ENCODE measurements at regions of chr11 and their contacts with region 1.

Region 1: DNA sequence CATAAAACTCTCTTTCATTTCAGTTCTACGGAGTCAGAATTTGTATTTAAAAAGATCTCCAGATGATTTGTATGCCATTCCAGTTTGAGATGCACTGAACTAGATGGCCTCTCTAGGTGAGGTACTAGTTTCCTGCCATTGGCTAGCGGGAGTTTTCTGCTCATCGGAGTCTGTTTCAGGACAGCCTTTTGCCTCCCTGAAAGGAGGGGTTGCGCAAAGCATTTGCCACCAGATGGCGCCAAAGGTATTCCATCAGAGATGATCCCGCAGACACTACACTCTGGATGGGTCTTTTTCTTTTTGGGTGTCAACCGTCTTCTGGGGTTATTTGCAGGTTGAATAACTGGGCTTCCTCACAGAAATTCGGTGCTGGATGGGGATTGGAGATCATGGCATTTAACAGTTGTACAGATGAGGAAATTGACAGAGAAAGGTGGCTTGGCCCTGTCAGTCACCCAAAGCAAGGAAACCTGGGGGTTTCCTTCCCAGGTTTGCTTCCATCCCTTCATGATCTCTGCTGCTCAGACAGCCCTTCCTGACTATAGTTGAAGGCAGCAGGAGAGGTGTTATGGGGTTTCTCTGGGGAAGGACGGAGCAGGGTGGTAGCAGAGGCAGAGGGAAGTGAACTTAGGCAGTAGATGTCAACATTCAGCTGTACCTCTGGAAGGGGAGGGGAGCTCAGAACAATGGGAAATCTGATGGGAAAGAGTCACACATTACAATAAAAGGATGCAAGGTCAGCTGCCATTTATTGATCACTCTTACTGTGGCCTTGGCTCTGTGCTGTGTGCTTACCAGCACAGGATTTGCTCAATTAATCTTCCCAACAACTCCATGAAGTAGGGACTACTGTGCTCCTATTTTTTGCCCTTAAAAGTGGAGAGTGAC is 81.6 kb downstream of the CCDC81 start:
- DNase-seq: no peak
- H3K4me3 ChIP-seq: no peak overlapping the region
- CTCF ChIP-seq: peak; percentile 83

Region 2: DNA sequence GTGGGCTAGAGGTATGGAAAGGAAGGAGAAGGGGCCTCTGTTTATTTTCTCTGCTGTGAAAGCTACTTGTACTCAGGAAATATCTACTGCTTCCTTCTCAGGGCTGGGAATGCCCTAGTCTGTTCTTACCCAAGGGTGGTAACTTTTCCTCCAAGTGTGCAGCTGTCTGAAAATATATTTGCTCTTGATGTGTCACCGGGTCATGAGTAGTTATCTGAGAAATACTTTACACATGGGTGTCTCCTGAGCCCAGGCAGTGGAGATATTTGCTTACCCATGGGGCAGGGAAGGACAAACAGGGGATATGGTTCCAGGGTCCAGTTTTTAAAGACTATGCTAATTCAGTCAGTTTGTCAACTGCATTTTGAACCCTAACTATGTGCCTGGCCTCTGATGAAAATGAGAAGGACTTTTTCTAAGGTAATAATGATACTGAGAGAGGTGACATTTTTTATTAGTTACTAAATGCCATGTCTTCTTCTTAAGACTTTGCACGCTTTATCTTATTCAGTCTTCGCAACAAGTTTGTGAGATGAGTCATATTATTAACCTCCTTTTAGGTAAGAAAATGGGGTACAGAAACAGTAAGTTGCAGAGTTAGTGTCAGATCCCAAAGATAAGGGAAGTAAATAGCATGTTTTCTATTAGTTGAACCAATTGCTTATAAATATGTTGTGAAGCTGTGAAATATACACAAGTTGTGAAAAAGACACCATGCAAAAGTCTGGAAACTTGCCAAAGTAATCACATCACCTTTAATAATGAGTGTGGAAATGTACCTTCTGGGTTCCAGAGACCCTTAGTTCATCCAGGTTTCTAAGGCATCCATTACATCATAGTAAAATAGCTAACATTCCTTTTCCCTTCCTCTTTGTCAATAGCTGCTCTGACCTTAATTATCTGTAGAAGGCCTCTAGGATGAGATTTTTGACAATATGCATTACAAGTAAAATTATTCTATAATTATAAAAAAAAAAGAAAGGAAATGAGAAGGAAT is 668.2 kb before region 1 on chr11:
- CTCF ChIA-PET with region 1: no interaction called
- POLR2A ChIA-PET with region 1: no interaction called
- DNase-seq: no peak
- H3K4me3 ChIP-seq: no peak overlapping the region
- CTCF ChIP-seq: no peak

Region 3: DNA sequence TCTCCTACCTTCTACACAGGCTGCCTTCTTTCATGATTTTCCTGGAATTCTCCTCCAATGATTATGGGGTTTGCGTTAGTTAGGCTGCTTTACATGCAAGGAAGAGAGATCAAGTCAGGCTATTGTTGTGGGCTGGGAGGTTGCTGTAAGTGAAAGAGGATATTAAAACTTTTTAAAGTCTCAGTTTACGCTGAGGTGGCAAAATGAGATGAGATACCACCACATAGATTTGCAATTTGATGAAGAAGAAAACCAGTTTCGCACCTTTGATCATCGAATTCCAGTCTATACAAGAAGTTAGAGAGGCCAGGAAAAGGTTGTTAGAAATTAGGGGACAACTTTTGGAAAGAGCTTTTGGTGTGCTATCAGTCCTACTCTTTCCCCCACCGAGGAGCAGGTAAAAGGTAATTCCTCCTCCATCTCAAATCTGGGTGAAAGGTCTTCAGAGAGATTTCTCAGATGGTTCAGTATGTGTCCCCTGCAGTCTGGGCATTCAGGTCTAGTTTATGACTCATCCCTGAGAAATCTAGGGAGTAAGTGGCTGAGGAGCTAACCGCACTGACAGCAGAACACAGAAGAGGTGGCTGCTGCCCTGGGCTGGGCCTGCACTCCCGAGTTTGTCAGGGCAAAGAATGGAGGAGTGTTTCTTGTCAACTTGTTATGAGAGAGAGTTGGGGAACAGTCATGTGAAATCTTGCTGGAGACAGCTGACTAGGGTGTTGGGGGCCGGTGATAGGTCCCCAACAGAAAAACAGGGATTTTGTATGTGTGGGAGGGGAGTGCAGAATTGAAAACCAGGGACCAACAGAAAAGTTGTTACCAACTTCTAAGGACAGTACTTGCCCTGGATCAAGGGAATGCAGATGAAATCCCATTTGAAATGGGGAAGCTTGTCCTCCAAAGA is 566.4 kb before region 1 on chr11:
- CTCF ChIA-PET with region 1: no interaction called
- POLR2A ChIA-PET with region 1: no interaction called
- DNase-seq: peak; percentile 42
- H3K4me3 ChIP-seq: no peak overlapping the region
- CTCF ChIP-seq: no peak

Region 4: GRCh38 chr11:86442420-86442819 is 13.9 kb before region 1 on chr11:
- CTCF ChIA-PET with region 1: interaction called, 16 read pairs
- POLR2A ChIA-PET with region 1: no interaction called
- DNase-seq: no peak
- H3K4me3 ChIP-seq: no peak overlapping the region
- CTCF ChIP-seq: no peak

Region 5: DNA sequence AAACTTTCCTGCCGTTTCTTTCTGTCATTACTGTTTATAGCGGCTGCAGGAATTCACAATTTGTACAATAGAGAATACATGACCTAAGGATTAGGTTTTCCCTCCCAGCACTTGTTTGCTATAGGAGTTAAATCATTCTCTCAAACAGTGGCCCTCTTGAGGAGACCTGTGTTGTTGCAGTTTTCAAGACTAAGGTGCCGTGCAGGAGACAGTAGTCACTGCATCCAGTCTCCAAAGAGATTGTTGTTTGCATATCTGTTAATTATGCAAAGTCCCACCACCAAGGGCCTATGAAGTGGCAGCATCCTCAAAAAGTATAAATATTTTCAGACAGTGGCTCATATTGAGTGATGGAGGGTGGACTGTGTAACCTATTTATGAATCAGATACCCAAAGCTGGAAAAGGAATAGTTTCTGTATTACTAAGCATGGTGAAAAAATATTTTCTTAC is 346.3 kb after region 1 on chr11:
- CTCF ChIA-PET with region 1: interaction called, 19 read pairs
- POLR2A ChIA-PET with region 1: interaction called, 5 read pairs
- DNase-seq: no peak
- H3K4me3 ChIP-seq: peak overlapping the region; percentile 82
- CTCF ChIP-seq: peak; percentile 51

Region 6: GRCh38 chr11:86818466-86819192 is 362.3 kb after region 1 on chr11:
- CTCF ChIA-PET with region 1: interaction called, 16 read pairs
- POLR2A ChIA-PET with region 1: no interaction called
- DNase-seq: peak; percentile 53
- H3K4me3 ChIP-seq: no peak overlapping the region
- CTCF ChIP-seq: peak; percentile 23

Region 7: GRCh38 chr11:86919557-86920210 is 463.4 kb after region 1 on chr11:
- CTCF ChIA-PET with region 1: interaction called, 56 read pairs
- POLR2A ChIA-PET with region 1: no interaction called
- DNase-seq: no peak
- H3K4me3 ChIP-seq: no peak overlapping the region
- CTCF ChIP-seq: peak; percentile 66

Measured in AG04449 (cell line).